ENCODE measurements at regions of chr16 and their contacts with region 1.

Region 1: GRCh38 chr16:68116256-68116867 is 31.2 kb downstream of the NFATC3 start:
- DNase-seq: peak in 1 of 2 donors; percentile 70
- ATAC-seq: peak; percentile 43 to 46 (median 44)
- H3K4me3 ChIP-seq: no peak overlapping the region
- H3K4me3 Mint-ChIP-seq: peak overlapping the region; percentile 30
- H3K27ac ChIP-seq: no peak overlapping the region
- H3K27ac Mint-ChIP-seq: peak overlapping the region; percentile 83 to 94
- H3K4me1 ChIP-seq: peaks cover 58% of the 10 kb centered on the region
- H3K4me1 Mint-ChIP-seq: peaks cover 77 to 88% of the 10 kb centered on the region in 2 donors
- H3K27me3 ChIP-seq: no peaks in the 10 kb centered on the region
- H3K27me3 Mint-ChIP-seq: no peaks in the 10 kb centered on the region
- CTCF ChIP-seq: peak; percentile 68

Region 2: GRCh38 chr16:68059804-68060203 is 56.6 kb before region 1 on chr16:
- intact Hi-C with region 1: no loop called
- DNase-seq: no peak
- ATAC-seq: no peak
- H3K4me3 ChIP-seq: no peak overlapping the region
- H3K4me3 Mint-ChIP-seq: peak overlapping the region; percentile 62
- H3K27ac ChIP-seq: peak overlapping the region; percentile 66
- H3K27ac Mint-ChIP-seq: peak overlapping the region; percentile 92 to 93
- H3K4me1 ChIP-seq: peaks cover 71% of the 10 kb centered on the region
- H3K4me1 Mint-ChIP-seq: peaks cover 82 to 86% of the 10 kb centered on the region in 2 donors
- H3K27me3 ChIP-seq: no peaks in the 10 kb centered on the region
- H3K27me3 Mint-ChIP-seq: no peaks in the 10 kb centered on the region
- CTCF ChIP-seq: no peak

Region 3: DNA sequence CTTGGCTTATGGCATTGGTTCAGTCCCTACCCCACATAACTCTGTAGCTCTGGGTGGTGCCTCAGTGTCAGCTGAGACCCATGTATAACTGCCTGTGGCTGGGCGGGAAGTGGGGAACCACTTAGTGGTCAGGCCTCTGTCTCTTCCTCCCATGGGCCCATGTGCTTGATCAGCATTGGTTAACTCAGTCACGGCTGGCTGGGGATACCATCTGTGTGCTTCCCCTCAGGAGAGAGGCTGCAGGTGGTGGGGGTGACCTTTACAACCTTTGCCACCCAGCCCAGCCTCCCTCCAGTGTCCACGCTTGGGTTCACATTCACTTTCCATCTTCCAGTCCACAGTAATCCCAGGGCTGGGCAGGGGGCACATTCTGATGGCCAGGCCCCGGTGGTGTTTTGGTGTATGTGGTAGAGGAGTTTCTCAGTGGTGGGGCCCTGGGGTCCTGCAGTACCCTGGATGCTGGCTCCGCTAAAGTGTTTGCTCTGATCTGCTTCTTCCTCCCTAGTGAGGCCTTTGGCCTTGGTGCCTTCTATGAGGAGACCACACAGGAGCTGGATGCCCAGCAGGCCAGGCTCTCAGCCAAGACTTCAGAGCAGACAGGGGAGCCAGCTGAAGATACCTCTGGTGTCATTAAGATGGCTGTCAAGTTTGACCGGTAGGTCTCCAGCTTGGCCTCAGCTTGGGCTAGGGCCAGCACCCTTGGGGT is 41.4 kb before region 1 on chr16:
- intact Hi-C with region 1: loop called (anchors 5 kb)
- DNase-seq: peak; percentile 78 to 83
- ATAC-seq: peak; percentile 60 to 84 (median 82)
- H3K4me3 ChIP-seq: no peak overlapping the region
- H3K4me3 Mint-ChIP-seq: peak overlapping the region; percentile 93
- H3K27ac ChIP-seq: peak overlapping the region; percentile 73
- H3K27ac Mint-ChIP-seq: peak overlapping the region; percentile 94 to 96
- H3K4me1 ChIP-seq: peaks cover 100% of the 10 kb centered on the region
- H3K4me1 Mint-ChIP-seq: peaks cover 79 to 87% of the 10 kb centered on the region in 2 donors
- H3K27me3 ChIP-seq: no peaks in the 10 kb centered on the region
- H3K27me3 Mint-ChIP-seq: no peaks in the 10 kb centered on the region
- CTCF ChIP-seq: no peak

Region 4: GRCh38 chr16:68085259-68086071 is 30.9 kb before region 1 on chr16 and contains the start of gene NFATC3:
- intact Hi-C with region 1: loop called (anchors 2 kb)
- DNase-seq: peak; percentile 97 to 98
- ATAC-seq: peak; percentile 75 to 93 (median 83)
- H3K4me3 ChIP-seq: peak within 1 kb of the TSS; percentile 94
- H3K4me3 Mint-ChIP-seq: peak within 1 kb of the TSS; percentile 88
- H3K27ac ChIP-seq: peak within 1 kb of the TSS; percentile 95
- H3K27ac Mint-ChIP-seq: peak within 1 kb of the TSS; percentile 81 to 90
- H3K4me1 ChIP-seq: peaks cover 51% of the 10 kb centered on the region
- H3K4me1 Mint-ChIP-seq: peaks cover 67 to 72% of the 10 kb centered on the region in 2 donors
- H3K27me3 ChIP-seq: no peaks in the 10 kb centered on the region
- H3K27me3 Mint-ChIP-seq: no peaks in the 10 kb centered on the region
- CTCF ChIP-seq: no peak
- total RNA-seq, gene NFATC3: 241 to 282 (median 263) TPM

Region 5: DNA sequence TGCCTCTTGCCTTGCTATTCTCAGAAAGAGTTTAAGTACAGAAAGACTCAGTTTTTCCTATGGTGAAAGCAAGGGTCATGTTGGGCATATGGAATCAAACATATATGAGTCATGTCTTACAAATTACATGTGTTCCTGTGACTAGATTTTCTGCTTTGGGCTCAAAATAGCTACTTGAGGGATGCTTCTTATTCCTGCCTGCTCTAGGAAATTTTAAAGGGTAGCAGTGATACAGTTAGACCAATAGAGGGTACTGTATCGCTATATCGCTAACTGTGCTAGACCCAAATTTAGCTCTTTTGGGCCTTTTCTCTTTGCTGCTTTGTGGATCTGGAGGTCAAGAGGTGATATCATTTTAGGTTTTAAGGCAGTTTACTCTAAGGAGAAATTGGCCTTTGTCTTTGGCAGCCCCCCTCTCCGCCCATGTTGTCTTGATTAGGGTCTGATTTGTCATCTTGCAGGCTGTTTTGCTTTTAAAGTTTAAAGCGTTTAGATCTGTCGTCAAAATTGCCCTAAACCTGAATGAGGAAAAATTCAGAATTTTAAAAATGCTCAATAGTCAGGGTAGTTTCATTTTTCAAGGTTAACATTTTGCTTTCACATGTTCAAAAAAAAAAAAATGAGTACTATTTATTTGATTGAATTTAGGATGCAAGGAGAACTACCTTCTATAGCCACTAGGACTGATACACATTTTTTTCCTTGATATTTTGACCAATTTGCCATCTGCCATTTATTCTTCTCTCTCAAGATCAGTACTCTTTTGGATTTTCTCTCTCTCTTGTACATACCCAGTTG is 22.3 kb before region 1 on chr16:
- intact Hi-C with region 1: loop called (anchors 1 kb)
- DNase-seq: peak in 1 of 2 donors; percentile 64
- ATAC-seq: peak; percentile 78 to 85 (median 85)
- H3K4me3 ChIP-seq: no peak overlapping the region
- H3K4me3 Mint-ChIP-seq: peak overlapping the region; percentile 47
- H3K27ac ChIP-seq: peak overlapping the region; percentile 58
- H3K27ac Mint-ChIP-seq: peak overlapping the region; percentile 66 to 89
- H3K4me1 ChIP-seq: peaks cover 31% of the 10 kb centered on the region
- H3K4me1 Mint-ChIP-seq: peaks cover 82 to 84% of the 10 kb centered on the region in 2 donors
- H3K27me3 ChIP-seq: no peaks in the 10 kb centered on the region
- H3K27me3 Mint-ChIP-seq: no peaks in the 10 kb centered on the region
- CTCF ChIP-seq: peak; percentile 61

Region 6: DNA sequence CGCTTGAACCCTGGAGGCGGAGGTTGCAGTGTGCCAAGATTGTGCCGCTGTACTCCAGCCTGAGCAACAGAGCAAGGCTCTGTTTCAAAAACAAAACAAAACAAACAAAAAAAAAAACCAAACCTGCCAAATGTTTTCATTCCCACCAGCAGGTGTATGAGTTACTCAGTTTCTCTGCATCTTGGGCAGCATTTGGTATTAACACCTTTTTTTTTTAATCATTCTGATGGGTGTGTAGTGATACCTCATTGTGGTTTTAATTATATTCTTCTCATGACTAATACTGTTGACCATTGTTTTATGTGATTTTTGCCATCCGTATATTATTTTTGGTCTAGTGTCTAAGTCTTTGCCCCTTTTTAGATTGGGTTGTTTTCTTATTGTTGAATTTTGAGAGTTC is 15.9 kb before region 1 on chr16:
- intact Hi-C with region 1: loop called (anchors 1 kb)
- DNase-seq: no peak
- ATAC-seq: peak; percentile 63 to 69 (median 68)
- H3K4me3 ChIP-seq: no peak overlapping the region
- H3K4me3 Mint-ChIP-seq: peak overlapping the region; percentile 68
- H3K27ac ChIP-seq: peak overlapping the region; percentile 0
- H3K27ac Mint-ChIP-seq: peak overlapping the region; percentile 80 to 81
- H3K4me1 ChIP-seq: peaks cover 45% of the 10 kb centered on the region
- H3K4me1 Mint-ChIP-seq: peaks cover 76 to 79% of the 10 kb centered on the region in 2 donors
- H3K27me3 ChIP-seq: no peaks in the 10 kb centered on the region
- H3K27me3 Mint-ChIP-seq: no peaks in the 10 kb centered on the region
- CTCF ChIP-seq: no peak

Measured in natural killer cell (primary cell).